ENCODE measurements at regions of chr2 and their contacts with region 1.

Region 1: DNA sequence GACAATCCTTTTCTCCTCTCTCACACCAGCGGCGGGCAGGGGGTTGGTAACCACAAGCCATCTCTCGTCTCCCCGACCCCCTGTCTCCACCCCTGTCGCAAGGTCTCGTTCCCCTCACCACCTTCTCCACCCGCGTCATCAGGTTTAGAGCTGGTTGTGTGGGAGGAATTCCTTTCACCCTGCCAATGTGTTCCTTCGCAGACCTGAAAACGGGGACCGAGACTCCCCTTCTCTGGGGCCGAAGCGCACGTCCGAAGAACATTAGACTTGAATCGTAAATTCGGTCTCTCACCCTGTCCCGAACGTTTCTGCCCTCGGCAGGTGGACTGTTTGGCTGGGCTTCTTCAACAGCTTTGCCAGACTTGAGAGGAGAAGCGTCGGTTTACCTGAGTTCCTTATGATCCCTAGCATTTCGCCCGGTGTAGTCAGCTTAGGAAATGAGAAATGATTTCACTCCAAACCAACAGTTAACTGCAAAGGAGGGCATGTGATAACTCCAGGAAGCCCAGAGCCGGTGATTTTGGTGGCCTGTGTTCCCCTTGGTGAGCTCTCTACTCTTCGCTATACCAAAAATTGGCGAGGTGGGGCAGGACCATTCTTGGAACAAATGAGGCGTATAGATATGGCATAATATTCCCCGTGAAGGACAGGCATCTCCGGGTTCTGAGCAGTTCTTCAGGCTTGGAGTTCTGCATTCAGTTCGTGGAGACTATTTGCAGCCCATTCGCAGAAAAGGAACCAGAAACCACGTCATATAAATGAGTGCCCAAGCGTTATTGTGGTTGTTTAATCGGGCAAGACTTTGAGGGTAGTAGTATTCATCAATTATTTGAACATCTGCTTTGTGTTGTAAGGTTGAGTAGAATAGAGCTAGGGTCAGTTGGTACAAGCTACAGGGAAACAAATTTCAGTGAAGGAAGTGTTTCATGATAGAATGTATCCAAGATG is 694 bp downstream of the CFAP36 start:
- DNase-seq: peak; percentile 15
- H3K4me3 Mint-ChIP-seq: peak overlapping the region; percentile 97
- H3K27ac Mint-ChIP-seq: peak overlapping the region; percentile 95
- H3K4me1 Mint-ChIP-seq: peaks cover 17% of the 10 kb centered on the region
- H3K27me3 Mint-ChIP-seq: no peaks in the 10 kb centered on the region

Region 2: DNA sequence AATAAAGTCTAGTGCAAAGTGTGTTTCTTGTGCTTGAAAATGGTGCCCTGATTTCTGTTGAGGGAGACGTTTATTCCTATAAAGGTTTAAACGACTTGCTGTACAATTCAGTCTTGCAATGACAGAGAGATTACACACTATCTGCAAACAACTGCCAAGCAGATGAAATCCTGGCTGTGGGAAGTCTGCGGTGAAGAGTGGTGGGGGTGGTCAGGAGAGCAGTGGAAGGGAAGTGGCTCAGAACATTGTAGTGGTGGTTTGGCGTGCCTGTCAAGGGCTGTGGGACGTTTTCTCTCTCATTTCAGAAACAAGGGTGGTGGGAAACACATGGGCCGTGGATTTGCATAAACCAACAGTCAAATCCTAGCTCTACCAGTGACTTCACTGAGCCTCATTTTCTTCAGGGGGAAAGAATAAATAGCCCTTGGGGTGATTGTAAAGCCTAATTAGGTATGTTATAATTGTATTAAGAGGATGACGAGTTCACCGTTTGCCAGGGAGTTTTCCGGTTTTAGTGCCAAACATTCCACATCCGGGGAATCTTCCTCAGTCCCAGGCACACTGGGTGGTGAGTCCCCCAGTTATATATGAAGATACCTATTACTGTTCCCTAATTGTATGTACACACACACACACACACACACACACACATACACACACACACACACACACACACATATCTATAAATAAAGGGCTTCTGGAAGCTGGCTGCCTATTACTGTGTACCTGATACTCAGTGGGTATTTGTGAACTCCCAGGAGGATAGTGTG is 949.1 kb before region 1 on chr2:
- intact Hi-C with region 1: loop called (anchors 2 kb)
- DNase-seq: peak; percentile 84
- H3K4me3 Mint-ChIP-seq: peak overlapping the region; percentile 70
- H3K27ac Mint-ChIP-seq: peak overlapping the region; percentile 92
- H3K4me1 Mint-ChIP-seq: peaks cover 91% of the 10 kb centered on the region
- H3K27me3 Mint-ChIP-seq: peaks cover 2% of the 10 kb centered on the region

Region 3: GRCh38 chr2:55232084-55232862 is 287.9 kb before region 1 on chr2 and contains the starts of genes CLHC1 and RPS27A:
- intact Hi-C with region 1: loop called (anchors 1 kb)
- DNase-seq: peak; percentile 89
- H3K4me3 Mint-ChIP-seq: peak within 1 kb of the TSS; percentile 100
- H3K27ac Mint-ChIP-seq: peak within 1 kb of the TSS; percentile 97
- H3K4me1 Mint-ChIP-seq: peaks cover 63% of the 10 kb centered on the region
- H3K27me3 Mint-ChIP-seq: no peaks in the 10 kb centered on the region
- total RNA-seq, gene CLHC1: 9.0 and 12.3 TPM in 2 replicates
- total RNA-seq, gene RPS27A: 949 and 953 TPM in 2 replicates

Region 4: DNA sequence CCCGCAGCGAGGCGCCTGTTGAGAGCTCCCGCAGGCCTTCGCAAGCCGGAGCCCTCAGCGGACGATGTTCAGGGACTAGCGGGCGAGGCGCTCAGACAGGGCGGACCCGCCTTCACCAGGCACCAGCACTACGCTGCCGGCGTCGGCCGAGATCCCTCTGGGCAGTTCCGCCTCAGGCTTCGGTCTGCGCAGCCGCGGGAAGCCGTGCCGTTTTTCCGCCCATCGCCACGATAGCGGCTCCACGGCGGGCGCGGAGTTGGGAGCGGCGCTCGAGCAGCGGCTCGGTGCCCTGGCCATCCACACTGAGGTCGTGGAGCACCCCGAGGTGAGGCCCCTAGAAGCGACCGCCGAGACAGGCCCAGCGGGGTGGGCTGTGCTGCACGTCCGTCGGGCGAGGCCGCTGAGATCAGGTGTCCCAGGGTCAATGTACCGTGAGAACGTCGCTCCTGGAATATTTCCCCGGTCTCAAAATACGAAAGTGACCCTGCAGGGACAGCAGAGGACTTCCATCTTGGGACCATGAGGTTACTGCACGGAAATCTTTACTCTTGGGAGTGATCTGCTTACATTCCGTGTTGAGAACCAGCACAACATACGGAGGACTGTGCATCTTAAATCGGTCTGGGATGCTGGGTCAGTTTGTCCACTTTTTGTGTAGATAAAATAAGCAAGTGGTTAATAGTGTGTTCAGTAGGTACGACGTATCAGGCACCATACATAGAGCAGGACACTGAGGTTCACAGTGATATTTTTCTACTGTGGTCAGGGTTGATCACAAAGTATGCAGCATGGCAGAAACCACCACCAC is 237.9 kb before region 1 on chr2:
- intact Hi-C with region 1: loop called (anchors 1 kb)
- DNase-seq: peak; percentile 85
- H3K4me3 Mint-ChIP-seq: peak overlapping the region; percentile 89
- H3K27ac Mint-ChIP-seq: peak overlapping the region; percentile 93
- H3K4me1 Mint-ChIP-seq: peaks cover 12% of the 10 kb centered on the region
- H3K27me3 Mint-ChIP-seq: peaks cover 2% of the 10 kb centered on the region

Region 5: GRCh38 chr2:55419679-55420438 is 100.4 kb before region 1 on chr2 and contains the start of gene CCDC88A:
- intact Hi-C with region 1: loop called (anchors 1 kb)
- DNase-seq: peak; percentile 78
- H3K4me3 Mint-ChIP-seq: peak within 1 kb of the TSS; percentile 89
- H3K27ac Mint-ChIP-seq: peak within 1 kb of the TSS; percentile 50
- H3K4me1 Mint-ChIP-seq: peaks cover 23% of the 10 kb centered on the region
- H3K27me3 Mint-ChIP-seq: peaks cover 25% of the 10 kb centered on the region
- total RNA-seq, gene CCDC88A: 6.4 and 8.4 TPM in 2 replicates

Region 6: GRCh38 chr2:55590810-55591440 is 70.7 kb after region 1 on chr2:
- intact Hi-C with region 1: loop called (anchors 2 kb)
- DNase-seq: no peak
- H3K4me3 Mint-ChIP-seq: no peak overlapping the region
- H3K27ac Mint-ChIP-seq: peak overlapping the region; percentile 67
- H3K4me1 Mint-ChIP-seq: peaks cover 21% of the 10 kb centered on the region
- H3K27me3 Mint-ChIP-seq: no peaks in the 10 kb centered on the region

Region 7: DNA sequence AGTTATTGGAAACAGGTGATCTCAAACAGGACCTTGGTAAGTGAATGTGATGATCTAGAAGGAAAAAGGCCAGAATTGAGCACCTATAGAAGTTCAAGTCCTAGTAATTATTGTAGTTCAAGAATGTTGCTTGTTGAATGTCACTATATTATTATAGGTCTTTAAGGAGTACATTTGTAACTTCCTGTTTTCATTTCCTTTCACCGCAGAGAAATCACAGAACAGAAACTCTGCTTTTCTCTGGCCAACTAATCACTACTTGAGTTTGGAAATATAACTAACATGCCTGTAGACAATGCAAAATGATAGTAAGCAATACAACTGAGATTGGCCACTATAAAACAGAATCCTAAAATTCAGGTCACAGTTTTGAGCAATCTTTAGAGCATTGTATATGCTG is 465.2 kb after region 1 on chr2:
- intact Hi-C with region 1: no loop called
- DNase-seq: no peak
- H3K4me3 Mint-ChIP-seq: no peak overlapping the region
- H3K27ac Mint-ChIP-seq: no peak overlapping the region
- H3K4me1 Mint-ChIP-seq: no peaks in the 10 kb centered on the region
- H3K27me3 Mint-ChIP-seq: no peaks in the 10 kb centered on the region

Measured in activated T-helper 1 cell treated with anti-CD3 and anti-CD28 coated beads, Interleukin-12 subunit alpha, Interleukin-12 subunit beta, Interleukin-2, Interleukin-4 antibody, amounts not matched to agents 30 ng/mL and 10 ng/mL and 1 ng/mL, durations not matched to agents 14 hours and 24 hours and 36 hours (primary cell).